ENCODE measurements at regions of chr11 and their contacts with region 1.

Region 1: DNA sequence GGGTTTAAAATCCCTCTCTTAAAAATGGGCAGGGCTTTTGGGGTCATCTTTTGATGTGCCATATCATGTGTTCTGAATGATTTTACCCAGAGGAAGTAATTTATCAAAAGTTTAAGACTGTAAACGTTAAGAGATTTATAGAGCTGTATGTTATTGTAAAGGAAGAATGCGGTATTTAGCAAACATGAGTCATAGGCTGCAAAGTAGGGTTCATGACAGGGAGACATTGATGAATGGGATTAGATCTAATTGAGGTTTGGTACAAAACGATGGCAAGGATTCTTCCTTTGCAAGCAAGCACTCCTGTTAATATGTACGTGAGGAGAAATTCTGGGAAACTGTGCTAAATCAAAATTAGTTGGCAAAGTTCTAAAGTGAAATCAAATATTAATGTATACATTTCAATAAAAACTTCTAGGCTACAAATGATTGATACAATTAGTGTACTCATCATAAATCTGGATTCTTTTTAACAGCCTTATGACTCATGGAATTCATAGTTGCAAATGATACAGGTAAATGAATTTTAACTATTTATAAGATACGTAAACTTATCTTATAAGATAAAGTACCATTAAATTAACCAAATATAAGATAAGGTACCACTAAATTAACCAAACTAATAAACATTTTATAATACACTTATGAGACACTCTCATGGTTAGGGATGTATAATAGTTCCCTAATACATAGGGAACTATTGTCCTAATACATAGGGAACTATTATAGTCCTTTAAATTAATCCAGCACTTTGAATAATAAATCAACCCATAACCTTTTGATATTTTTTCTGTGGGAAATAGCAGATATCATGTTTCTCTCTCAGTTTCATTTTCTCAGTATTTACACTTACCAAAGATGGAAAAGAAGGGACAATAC is 58.4 kb downstream of the KIF18A start:
- DNase-seq: peak; percentile 3
- H3K4me3 Mint-ChIP-seq: no peak overlapping the region
- H3K27ac Mint-ChIP-seq: peak overlapping the region; percentile 63
- H3K4me1 Mint-ChIP-seq: peaks cover 25% of the 10 kb centered on the region
- H3K27me3 Mint-ChIP-seq: no peaks in the 10 kb centered on the region
- CTCF ChIP-seq: no peak

Region 2: DNA sequence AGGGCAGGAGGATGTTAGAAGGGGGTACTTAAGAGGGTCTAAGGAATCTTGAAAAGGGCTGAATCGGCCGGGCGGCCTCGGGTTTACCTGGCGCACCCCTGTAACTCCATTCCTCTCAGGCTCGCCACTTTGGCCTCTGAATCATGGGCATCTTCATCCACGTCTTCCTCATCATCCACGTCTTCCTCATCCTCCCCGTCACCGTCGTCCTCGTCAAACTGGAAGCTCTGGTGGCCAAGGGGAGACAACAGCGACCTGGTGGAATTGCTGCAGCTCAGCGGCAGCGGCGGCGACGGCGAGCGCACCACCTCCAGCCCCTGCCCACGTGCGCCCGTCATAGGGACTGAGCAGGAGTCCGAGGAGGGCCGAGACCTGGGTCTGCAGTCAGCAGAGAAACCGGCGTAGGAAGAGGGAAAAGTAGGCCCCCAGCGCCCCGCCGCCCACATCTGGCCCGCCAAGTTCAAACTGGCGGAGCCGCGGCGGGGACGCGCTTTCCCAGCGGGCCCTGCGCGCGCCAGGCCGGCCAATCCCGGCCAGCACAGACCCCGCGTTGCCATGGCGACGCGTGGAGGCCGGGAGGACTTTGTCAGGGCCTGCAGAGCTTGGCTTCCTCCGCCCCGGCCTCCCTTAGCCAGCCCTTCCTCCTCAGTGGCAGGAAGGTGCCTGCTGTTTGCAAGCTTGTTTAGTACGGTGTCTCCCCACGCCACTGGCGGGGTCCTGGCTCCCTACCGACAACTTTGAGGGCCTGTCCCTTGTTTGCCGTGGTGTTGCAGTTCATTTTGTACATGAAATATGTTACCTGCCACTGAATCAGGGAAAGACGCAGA is 686.6 kb before region 1 on chr11 and contains the start of gene CCDC34:
- CTCF ChIA-PET with region 1: no interaction called
- intact Hi-C with region 1: no loop called
- DNase-seq: peak; percentile 92
- H3K4me3 Mint-ChIP-seq: peak within 1 kb of the TSS; percentile 97
- H3K27ac Mint-ChIP-seq: peak within 1 kb of the TSS; percentile 82
- H3K4me1 Mint-ChIP-seq: peaks cover 41% of the 10 kb centered on the region
- H3K27me3 Mint-ChIP-seq: no peaks in the 10 kb centered on the region
- CTCF ChIP-seq: no peak
- total RNA-seq, gene CCDC34: 17.6 and 21.6 TPM in 2 replicates

Region 3: DNA sequence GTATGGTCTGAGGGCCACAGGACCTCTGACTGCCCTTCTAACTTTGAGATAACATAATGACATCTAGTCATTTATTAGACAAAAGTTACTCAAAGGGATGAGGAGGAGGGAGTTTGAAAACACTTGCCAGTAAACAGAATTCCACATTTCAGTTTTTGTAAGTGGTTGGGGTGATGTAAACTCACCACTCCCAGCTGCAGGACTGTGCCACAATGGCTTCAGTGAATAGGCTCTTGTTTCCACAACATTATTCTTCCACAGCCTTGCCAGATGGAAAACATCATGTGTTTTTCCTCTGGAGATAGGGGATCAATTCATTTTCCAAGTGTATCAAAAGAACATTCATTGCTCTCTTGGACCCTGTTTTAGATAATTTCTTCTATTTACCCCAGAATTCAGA is 202.1 kb before region 1 on chr11:
- CTCF ChIA-PET with region 1: no interaction called
- intact Hi-C with region 1: loop called (anchors 10 kb)
- DNase-seq: no peak
- H3K4me3 Mint-ChIP-seq: no peak overlapping the region
- H3K27ac Mint-ChIP-seq: no peak overlapping the region
- H3K4me1 Mint-ChIP-seq: peaks cover 10% of the 10 kb centered on the region
- H3K27me3 Mint-ChIP-seq: no peaks in the 10 kb centered on the region
- CTCF ChIP-seq: no peak

Measured in Calu3 (cell line).